Right ventricle myocardium superior (tissue), 1 donor: ENCODE measurements at regions of chrX and their contacts with region 1.

Region 1: DNA sequence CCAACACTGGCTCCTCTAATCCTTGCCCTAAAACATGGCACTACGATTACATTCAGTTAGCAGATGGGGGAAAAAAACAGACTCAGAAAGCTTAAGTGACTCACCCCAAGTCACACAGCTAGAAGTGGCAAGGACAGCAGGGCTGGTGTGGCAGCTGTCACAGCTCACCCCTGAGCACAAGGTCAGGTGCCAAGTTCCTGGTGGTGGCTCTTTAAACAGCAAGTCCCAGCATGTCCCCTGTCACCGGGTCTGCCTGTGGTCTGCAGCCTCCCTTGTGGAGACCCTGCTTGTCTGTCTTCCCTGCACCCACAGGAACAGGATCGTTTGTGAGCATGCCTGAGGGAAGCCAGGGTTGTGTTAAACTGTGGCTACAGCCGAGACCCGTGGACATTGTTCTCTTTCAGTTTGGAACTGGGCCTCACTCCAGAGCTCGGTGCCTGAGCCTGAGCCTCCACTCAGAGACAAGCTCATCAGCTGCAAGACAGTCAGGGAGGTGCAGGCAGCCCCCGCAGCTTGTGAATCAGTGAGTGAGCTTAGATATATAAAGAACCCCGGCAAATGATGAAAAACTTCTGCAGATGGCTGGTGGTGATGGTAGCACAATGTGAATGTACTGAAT is 260.8 kb downstream of the BCOR start:
- DNase-seq: no peak
- ATAC-seq: peak; percentile 74

Region 2: GRCh38 chrX:39886282-39886681 is 49.4 kb after region 1 on chrX:
- intact Hi-C with region 1: loop called (anchors 10 kb)
- DNase-seq: peak; percentile 57
- ATAC-seq: peak; percentile 78

Region 3: DNA sequence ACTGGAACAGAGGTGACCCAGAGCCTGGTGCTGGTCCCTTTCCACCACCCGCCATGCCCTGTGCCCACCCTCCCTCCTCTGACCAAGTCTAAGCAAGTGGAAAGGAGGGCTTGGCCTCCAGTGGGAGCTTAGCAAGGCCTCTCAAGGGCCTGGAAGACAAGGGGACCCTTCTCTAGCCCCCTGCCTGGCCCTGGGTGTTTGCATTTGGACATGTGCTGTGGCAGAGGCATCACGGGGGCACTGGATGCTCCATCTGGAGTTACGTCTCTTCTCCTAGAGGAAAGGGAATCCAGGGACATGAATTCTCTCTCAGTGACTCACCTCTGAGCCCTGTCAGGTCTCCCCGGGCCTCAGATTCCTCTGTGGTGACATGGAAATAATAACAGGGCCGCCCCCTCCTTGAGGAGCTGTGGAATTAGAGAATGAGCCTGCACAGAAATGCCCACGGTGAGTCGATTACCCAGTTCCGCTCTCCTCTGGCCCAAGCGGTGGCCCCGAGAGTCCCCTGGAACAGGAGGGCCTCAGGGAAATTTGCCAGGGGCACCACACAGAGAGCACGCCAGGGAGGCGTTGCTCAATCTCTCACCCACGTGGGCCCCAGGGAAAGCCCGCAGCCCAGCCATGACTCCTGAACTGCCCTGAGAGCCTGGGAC is 71.2 kb after region 1 on chrX:
- intact Hi-C with region 1: no loop called
- DNase-seq: peak; percentile 61
- ATAC-seq: peak; percentile 89